ENCODE measurements at regions of chr21 and their contacts with region 1.

Region 1: GRCh38 chr21:39441502-39442475 is 3.8 kb downstream of the LCA5L start:
- DNase-seq: peak; percentile 14
- H3K4me3 ChIP-seq: no peak overlapping the region
- CTCF ChIP-seq: peak; percentile 73

Region 2: DNA sequence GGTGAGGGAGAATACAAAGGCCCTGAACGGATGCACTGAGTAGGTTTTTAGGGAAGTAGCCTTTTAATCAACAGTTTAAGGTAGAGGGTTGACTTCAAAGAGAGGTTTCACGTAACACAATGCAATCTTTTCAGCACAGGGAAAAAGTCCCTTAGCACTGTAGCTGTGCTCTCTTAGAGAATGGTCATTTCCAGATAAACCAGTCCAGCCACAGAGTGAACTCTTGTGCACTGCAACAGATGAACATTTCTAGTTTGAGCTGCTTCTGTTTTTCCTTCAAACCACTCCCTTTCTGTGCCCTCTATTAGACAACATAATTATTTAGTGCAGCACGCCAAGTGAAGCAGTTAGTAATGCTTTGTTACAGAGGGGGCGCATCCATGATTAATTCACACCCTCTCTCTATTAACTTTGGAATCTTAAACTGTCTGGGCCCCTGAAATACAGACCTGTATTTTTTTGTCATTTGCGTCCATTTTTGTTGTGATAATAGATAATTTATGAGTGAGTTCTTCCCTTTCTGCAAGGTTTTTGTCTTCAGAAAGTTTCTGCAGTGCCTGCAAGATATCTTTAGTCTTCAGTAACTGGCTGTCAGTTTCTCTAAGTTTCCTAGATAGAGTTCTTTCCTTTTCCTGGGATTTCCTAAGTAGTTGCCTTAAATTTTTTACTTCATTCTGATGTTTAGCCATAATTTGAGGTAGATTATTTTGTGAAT is 19.1 kb before region 1 on chr21:
- CTCF ChIA-PET with region 1: interaction called, 28 read pairs
- POLR2A ChIA-PET with region 1: interaction called, 3 read pairs
- DNase-seq: no peak
- H3K4me3 ChIP-seq: no peak overlapping the region
- CTCF ChIP-seq: no peak

Region 3: DNA sequence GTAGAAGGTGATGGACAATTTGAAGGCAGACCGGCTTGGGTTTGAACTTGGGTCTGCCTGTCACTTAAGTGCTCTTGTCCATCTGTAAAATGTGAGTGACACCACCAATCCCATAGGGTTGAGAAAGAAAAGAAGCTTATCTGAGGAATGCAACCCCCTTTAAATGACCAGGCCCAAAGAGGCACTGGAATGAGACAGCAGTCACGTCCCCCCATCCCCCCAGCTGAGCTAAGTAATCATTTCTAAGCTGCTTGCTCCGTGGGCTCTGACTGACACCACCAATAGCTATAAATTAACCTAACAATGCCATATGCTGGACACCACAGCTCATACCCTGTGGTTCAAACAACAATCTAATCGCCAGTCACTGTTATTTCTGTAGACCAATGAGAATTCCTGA is 11.3 kb before region 1 on chr21:
- CTCF ChIA-PET with region 1: interaction called, 43 read pairs
- POLR2A ChIA-PET with region 1: no interaction called
- DNase-seq: no peak
- H3K4me3 ChIP-seq: no peak overlapping the region
- CTCF ChIP-seq: no peak

Measured in AG04449 (cell line).